B cell (primary cell): ENCODE measurements at regions of chr4 and their contacts with region 1.

Region 1: DNA sequence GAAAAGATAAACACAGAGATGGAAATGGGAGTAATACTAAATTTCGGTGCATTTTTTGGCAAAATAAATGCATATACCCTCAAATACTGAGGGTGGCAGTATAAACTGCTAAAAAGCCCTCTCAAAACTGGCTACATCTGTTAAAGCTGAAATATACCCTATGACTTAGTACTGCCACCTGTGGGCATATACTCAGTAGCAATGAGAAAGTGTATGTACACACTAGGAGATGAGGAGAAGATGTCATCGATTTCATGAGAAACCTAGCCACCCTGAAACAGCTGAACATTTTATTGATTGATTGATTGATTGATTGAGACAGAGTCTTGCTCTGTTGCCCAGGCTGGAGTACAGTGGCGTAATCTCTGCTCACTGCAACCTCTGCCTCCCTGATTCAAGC is 12.2 kb upstream of the TMEM128 start:
- DNase-seq: peak; percentile 42
- ATAC-seq: peak; percentile 80
- H3K4me3 ChIP-seq: no peak overlapping the region
- H3K4me3 Mint-ChIP-seq: no peak overlapping the region
- H3K27ac ChIP-seq: no peak overlapping the region
- H3K27ac Mint-ChIP-seq: no peak overlapping the region
- H3K4me1 ChIP-seq: no peaks in the 10 kb centered on the region
- H3K4me1 Mint-ChIP-seq: no peaks in the 10 kb centered on the region
- H3K27me3 ChIP-seq: peaks cover 0 to 6% (median 0%) of the 10 kb centered on the region in 4 experiments
- H3K27me3 Mint-ChIP-seq: peaks cover 7% of the 10 kb centered on the region
- CTCF ChIP-seq: peak; percentile 59

Region 2: GRCh38 chr4:4334798-4335520 is 74.7 kb after region 1 on chr4:
- CTCF ChIA-PET with region 1: interaction called, 14 read pairs
- POLR2A ChIA-PET with region 1: no interaction called
- intact Hi-C with region 1: loop called (anchors 2 kb)
- DNase-seq: peak; percentile 74
- ATAC-seq: peak; percentile 65
- H3K4me3 ChIP-seq: no peak overlapping the region
- H3K4me3 Mint-ChIP-seq: no peak overlapping the region
- H3K27ac ChIP-seq: no peak overlapping the region
- H3K27ac Mint-ChIP-seq: no peak overlapping the region
- H3K4me1 ChIP-seq: peaks cover 0 to 8% of the 10 kb centered on the region in 2 donors
- H3K4me1 Mint-ChIP-seq: peaks cover 4% of the 10 kb centered on the region
- H3K27me3 ChIP-seq: peaks cover 0 to 11% (median under 1%) of the 10 kb centered on the region in 4 experiments
- H3K27me3 Mint-ChIP-seq: peaks cover 14% of the 10 kb centered on the region
- CTCF ChIP-seq: peak; percentile 86